ENCODE measurements at regions of chr5 and their contacts with region 1.

Region 1: DNA sequence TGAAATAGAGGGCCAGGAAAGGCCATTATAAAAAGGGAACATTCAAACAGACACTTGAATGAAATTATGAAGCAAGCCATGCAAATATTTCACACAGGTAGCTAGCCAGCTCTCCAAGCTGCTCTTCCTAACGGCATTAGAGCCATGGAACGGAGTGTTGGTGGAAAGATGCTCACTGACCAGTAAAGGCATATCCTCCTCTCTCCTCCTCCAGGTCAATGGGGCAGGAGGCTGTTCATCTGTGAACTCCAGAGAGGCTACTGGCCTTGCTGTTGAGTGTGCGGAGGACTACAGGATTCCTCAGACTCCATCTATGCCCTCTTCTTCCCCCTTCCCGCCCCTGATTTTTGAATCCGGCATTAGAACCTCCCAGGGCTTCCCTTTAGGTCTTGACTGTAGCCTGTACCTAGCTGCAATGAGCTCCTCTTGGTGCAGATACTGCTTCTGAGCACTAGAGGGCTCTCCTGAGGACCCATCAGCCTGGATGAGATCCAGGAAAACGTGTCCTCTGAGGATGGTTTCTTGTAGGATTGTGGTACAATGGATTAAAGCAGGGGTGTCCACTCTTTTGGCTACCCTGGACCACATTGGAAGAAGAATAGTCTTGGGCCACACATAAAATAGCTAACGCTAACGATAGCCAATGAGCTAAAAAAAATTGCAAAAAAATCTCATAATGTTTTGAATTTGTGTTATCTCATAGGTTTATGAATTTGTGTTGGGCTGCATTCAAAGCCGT is 162.2 kb downstream of the SREK1 start:
- DNase-seq: peak; percentile 69
- CTCF ChIP-seq: peak; percentile 82

Region 2: GRCh38 chr5:66769839-66770617 is 463.8 kb after region 1 on chr5:
- in situ Hi-C with region 1: loop called (anchors 10 kb)
- DNase-seq: no peak
- CTCF ChIP-seq: peak; percentile 35